Posterior vena cava (tissue), 2 donors: ENCODE measurements at regions of chr1 and their contacts with region 1.

Region 1: DNA sequence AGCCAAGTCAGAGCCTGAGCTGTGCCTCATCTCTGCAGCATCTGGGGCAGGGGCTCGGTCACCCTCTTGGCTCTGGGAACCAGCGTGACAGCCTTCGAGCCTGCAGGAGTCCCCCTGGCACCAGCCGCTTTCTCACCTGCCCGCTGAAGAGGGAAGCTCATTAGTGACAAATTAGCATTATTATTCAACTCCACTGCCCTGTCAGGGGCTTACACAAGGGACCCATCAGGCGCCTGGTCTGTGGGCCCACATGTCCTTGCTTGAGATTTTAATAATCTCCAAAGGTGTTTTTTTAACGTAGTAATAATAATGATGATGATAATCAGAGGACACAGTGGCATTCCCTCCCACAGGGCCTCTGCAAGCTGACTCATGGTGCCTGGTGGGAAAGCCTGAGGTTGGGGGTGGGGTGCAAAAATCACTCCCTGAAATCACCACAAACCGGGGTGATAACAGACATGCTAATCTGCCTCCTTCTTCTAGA is 98.1 kb upstream of the IGSF21 start:
- DNase-seq: no peak

Region 2: DNA sequence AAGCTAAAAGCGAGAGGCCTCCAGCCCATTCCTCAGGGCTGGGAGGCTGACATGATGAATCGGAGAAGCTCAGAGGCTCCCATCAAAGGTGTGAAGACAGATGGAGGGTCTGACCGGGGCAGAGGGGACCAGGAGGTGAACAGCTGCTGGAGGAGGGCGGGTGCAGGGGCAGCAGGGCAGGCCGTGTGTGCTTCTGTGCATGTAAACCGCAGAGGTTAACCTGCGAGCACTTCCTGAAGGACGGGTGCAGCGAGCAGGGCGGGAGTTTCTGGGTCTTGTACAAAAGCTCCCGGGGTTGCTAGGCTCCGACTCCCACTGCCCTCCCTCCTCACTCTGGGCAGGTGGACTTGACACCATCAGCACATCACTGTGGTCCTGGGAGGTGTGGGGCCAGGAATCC is 696.3 kb after region 1 on chr1:
- intact Hi-C with region 1: loop called in 1 of 2 experiments (anchors 5 kb)
- DNase-seq: no peak